ENCODE measurements at regions of chr5 and their contacts with region 1.

Region 1: DNA sequence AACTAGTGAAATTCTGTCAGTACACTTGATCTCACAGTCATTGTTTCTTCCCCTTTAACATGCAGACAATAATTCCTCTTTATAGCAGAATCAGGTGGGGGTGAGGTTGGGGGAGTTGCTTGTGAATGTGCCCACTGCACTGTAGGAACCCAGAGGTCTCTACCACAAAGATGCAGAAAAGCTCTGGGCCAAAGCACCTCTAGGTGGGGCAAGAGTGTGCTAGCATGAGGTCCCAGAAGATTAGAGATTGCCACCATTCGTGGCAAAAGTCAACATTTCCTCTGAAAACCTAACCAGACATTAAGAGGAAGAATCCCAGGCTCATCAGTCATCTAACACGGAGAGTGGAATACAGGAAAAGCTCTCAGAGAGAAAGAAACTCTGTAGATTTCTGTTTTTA is 74.5 kb downstream of the PTCD2 start:
- DNase-seq: peak in 1 of 2 experiments; percentile 31
- H3K4me3 ChIP-seq: no peak overlapping the region
- H3K4me3 Mint-ChIP-seq: no peak overlapping the region
- H3K27ac Mint-ChIP-seq: no peak overlapping the region
- H3K4me1 ChIP-seq: no peaks in the 10 kb centered on the region
- H3K4me1 Mint-ChIP-seq: no peaks in the 10 kb centered on the region
- H3K27me3 ChIP-seq: no peaks in the 10 kb centered on the region
- H3K27me3 Mint-ChIP-seq: peaks cover 8% of the 10 kb centered on the region
- CTCF ChIP-seq: peak; percentile 26 to 71

Region 2: DNA sequence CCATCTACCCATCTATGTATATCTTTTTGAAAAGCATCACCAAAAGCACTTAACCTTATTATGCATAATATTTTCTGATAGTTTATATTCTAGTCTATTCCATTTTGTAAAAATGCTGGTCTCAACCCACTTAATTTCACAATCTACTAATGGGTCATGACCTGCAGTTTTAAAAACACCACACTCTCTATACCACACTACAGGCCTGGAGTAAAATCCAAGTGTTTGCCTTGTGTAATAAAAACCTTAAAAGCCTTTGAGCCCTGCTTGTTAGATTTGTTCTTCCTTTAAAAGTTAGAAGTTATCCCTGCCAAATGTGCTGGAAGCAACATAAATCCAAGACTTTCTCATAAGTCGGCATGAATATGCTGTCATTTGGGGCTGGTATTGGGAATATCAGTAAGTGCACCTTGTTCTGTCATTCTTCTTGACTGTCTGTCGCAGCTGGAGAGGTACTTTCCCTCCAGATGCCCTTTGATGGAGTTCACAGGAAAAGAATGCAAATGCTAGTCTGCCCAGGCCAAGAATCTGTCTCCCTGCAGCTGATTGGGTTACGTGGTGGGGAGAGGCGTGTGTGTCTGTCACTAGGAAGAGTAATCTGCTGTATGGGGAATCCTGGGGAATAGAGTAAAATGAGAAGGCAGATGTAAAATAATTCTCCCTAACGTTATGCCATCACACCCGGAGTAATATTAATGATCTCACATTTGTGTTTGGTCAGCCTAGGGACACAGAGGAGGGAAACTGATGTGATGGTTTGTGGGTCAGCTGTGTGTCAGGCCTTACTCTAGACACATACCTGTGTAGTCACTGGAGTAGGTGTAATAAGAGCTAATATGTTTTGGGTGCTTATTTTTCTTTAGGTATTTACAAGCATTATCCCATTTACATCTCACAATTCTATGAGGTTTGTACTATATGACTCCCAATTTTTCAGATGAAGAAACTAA is 33.1 kb after region 1 on chr5:
- CTCF ChIA-PET with region 1: no interaction called
- POLR2A ChIA-PET with region 1: no interaction called
- intact Hi-C with region 1: no loop called
- DNase-seq: no peak
- H3K4me3 ChIP-seq: no peak overlapping the region
- H3K4me3 Mint-ChIP-seq: no peak overlapping the region
- H3K27ac Mint-ChIP-seq: no peak overlapping the region
- H3K4me1 ChIP-seq: no peaks in the 10 kb centered on the region
- H3K4me1 Mint-ChIP-seq: peaks cover 12% of the 10 kb centered on the region
- H3K27me3 ChIP-seq: no peaks in the 10 kb centered on the region; the same call in 1 of the 2 replicates
- H3K27me3 Mint-ChIP-seq: peaks cover 8% of the 10 kb centered on the region
- CTCF ChIP-seq: no peak

Region 3: DNA sequence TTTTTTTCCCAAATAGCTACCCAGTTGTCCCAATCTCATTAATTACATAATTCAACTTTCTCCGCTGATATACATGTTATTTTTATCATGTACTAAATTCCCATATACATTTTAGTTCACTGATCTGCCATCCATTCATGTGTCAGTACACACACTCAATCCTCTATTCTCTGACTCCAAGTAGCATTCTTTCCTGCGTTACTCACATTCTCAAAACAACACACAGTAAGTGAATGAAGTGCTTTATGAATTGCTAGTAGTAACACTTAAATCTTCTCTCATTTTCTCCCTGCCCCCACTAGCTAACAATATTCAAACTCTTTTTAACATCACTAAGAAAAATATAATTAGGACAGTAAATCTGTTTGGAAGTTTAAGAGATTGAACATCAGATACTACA is 103.6 kb after region 1 on chr5:
- CTCF ChIA-PET with region 1: no interaction called
- POLR2A ChIA-PET with region 1: no interaction called
- intact Hi-C with region 1: no loop called
- DNase-seq: no peak
- H3K4me3 ChIP-seq: no peak overlapping the region
- H3K4me3 Mint-ChIP-seq: no peak overlapping the region
- H3K27ac Mint-ChIP-seq: no peak overlapping the region
- H3K4me1 ChIP-seq: no peaks in the 10 kb centered on the region
- H3K4me1 Mint-ChIP-seq: no peaks in the 10 kb centered on the region
- H3K27me3 ChIP-seq: no peaks in the 10 kb centered on the region
- H3K27me3 Mint-ChIP-seq: peaks cover 4% of the 10 kb centered on the region
- CTCF ChIP-seq: no peak

Region 4: GRCh38 chr5:72523960-72524582 is 129.4 kb after region 1 on chr5:
- CTCF ChIA-PET with region 1: interaction called, 3 read pairs
- POLR2A ChIA-PET with region 1: no interaction called
- intact Hi-C with region 1: loop called (anchors 1 kb)
- DNase-seq: peak in 1 of 2 experiments; percentile 44
- H3K4me3 ChIP-seq: no peak overlapping the region
- H3K4me3 Mint-ChIP-seq: no peak overlapping the region
- H3K27ac Mint-ChIP-seq: no peak overlapping the region
- H3K4me1 ChIP-seq: no peaks in the 10 kb centered on the region
- H3K4me1 Mint-ChIP-seq: no peaks in the 10 kb centered on the region
- H3K27me3 ChIP-seq: no peaks in the 10 kb centered on the region
- H3K27me3 Mint-ChIP-seq: no peaks in the 10 kb centered on the region
- CTCF ChIP-seq: peak; percentile 21 to 55

Measured in Caco-2 (cell line).